ENCODE measurements at regions of chr5 and their contacts with region 1.

Region 1: DNA sequence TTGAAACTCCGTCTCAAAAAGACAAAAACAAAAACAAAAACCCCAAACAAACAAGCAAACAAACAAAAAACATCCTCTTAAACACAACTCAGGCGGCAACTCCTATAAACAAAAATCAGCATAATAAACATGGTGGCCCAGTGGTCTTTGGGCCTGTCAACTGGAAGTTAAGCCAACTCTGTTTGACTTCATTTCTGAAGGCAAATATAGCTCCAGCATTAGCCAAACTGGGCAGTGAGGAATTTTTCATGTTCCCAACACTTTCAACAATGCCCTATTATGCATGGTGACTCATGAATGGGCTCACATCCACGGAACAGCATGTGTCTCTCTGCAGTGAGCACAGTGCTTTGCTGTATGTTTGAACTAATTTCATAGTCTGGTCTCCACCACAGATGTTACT is 143.9 kb upstream of the STC2 start:
- DNase-seq: peak; percentile 81
- ATAC-seq: peak; percentile 75 to 84
- H3K4me3 ChIP-seq: no peak overlapping the region
- H3K27ac ChIP-seq: peak overlapping the region; percentile 77 to 92 (median 82)
- H3K4me1 ChIP-seq: peaks cover 36 to 45% of the 10 kb centered on the region in 2 donors
- H3K27me3 ChIP-seq: no peaks in the 10 kb centered on the region
- CTCF ChIP-seq: no peak
- POLR2A ChIP-seq: peak in 1 of 2 donors; percentile 22

Region 2: DNA sequence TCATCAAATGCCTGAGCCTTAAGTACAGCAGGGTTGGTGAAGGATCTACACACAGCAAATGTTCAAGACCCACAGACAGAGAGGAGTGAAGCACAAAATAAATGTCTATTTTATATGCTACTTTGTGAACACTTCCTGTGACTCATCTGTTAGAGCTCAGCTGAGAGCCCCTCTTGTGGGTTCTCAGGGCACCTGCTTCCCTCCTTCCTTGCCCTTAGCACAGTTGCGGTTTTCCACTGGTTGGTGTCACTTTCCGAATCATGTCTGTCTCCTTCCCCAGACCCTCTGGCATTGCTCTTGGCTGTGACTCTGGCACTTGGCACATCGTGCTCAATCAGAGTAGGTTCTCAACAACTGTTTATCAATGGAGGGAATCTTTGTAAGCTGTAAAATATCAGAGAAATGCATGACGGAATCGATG is 15.4 kb before region 1 on chr5:
- in situ Hi-C with region 1: no loop called
- intact Hi-C with region 1: loop called (anchors 1 kb)
- DNase-seq: no peak
- ATAC-seq: no peak
- H3K4me3 ChIP-seq: no peak overlapping the region
- H3K27ac ChIP-seq: peak overlapping the region; percentile 88 to 94 (median 90)
- H3K4me1 ChIP-seq: peaks cover 37 to 60% of the 10 kb centered on the region in 2 donors
- H3K27me3 ChIP-seq: no peaks in the 10 kb centered on the region
- CTCF ChIP-seq: no peak
- POLR2A ChIP-seq: no peak